Activated CD4-positive, alpha-beta memory T cell treated with anti-CD3 and anti-CD28 coated beads, Interleukin-2, amount 10 ng/mL, durations not matched to agents 7 days and 5 days (primary cell): ENCODE measurements at regions of chr2 and their contacts with region 1.

Region 1: DNA sequence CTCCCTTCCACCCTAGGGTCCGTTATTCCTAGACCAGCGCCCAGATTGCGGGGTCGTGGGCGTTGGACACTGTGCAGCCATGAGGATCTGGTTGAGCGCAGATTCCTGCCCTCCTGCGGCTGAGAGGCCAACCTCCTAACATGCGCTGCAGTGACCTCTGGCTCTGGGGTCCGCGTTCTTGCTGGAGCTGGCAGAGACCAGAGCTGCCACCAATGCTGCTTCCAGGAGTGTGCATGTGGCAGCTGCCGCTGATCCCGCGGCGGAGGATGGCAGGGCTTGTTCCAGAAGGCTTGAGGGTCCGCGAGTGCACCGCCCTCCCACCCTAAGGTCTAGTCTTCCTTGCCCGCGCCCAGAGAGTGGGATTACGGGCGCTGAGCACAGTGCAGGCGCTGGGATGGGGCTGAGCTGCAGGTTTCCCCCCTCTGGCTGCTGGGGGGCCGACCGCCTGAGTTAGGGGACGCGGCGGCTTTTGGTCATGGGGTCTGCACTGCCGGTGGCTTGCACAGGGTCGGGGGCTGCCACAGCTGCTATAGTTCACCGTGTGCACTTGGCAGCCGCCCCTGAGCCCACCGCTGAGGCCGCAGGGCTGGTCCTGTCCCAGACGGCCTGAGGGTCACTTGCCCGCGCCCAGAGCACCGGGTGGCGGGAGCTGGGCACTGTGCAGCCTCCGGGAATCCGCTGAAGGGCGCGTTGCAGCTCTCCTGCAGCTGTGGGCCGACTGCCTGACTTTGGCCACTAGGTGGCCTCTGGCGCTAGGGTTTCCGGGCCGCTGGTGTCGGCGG is 145.9 kb downstream of the CCDC74A start:
- DNase-seq: peak; percentile 74
- H3K4me3 Mint-ChIP-seq: no peak overlapping the region
- H3K27ac Mint-ChIP-seq: no peak overlapping the region
- H3K4me1 Mint-ChIP-seq: peaks cover 4% of the 10 kb centered on the region
- H3K27me3 Mint-ChIP-seq: peaks cover 33% of the 10 kb centered on the region

Region 2: DNA sequence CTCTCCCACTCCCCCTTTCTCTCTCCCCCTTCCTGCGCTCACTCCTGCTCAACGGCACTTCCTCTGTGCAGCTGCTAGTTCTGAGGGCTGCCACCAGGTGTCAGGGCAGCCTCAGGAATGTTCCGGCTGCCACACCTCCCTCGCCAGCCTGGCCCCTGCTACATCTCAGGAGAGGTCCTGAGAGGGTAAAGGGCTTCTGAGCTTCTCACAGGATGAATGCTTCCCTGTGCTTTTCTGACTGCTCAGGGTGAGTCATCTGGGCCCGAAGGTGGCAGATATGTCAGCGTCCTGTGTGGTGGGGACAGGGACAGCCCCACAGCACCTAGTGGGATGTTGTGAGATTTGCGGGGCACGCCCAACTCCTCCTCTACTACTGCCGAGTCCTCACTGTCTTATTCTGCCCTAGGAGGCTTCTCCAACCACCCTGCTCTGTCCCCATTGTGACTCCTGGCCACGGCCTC is 519.5 kb before region 1 on chr2:
- CTCF ChIA-PET with region 1: interaction called, 17 read pairs
- POLR2A ChIA-PET with region 1: no interaction called
- DNase-seq: peak; percentile 75
- H3K4me3 Mint-ChIP-seq: no peak overlapping the region
- H3K27ac Mint-ChIP-seq: peak overlapping the region; percentile 50
- H3K4me1 Mint-ChIP-seq: peaks cover 28% of the 10 kb centered on the region
- H3K27me3 Mint-ChIP-seq: peaks cover 2% of the 10 kb centered on the region

Region 3: DNA sequence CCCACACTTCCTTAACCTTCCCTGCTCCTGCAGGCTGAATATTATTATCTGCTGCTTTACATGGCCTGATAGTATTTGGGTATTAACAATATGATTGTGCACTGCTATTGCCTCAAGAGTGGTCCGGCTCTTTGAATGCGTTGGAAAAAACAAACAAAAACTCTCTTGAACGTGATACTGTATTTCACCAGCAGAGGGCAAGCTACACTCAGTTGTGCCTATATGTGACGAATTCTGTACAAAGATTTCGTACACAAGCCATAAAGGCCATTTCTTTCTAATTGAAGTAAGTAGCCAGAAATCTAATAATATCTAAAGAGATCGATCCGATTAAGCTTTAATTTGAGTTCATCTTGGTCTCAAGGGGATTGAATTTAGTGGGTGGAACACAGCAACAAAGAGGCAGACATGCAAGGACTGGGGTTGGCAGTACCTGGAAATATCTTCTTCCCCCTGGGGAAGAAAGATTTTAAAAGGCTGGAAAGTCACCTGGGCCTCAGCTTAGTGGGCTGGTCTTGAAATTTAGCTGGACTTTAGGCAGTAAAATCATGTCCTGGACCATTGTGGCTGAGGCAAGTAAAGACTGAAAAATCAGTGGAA is 260.3 kb before region 1 on chr2:
- CTCF ChIA-PET with region 1: interaction called, 55 read pairs
- POLR2A ChIA-PET with region 1: no interaction called
- DNase-seq: no peak
- H3K4me3 Mint-ChIP-seq: no peak overlapping the region
- H3K27ac Mint-ChIP-seq: no peak overlapping the region
- H3K4me1 Mint-ChIP-seq: peaks cover 5% of the 10 kb centered on the region
- H3K27me3 Mint-ChIP-seq: peaks cover 51% of the 10 kb centered on the region

Region 4: DNA sequence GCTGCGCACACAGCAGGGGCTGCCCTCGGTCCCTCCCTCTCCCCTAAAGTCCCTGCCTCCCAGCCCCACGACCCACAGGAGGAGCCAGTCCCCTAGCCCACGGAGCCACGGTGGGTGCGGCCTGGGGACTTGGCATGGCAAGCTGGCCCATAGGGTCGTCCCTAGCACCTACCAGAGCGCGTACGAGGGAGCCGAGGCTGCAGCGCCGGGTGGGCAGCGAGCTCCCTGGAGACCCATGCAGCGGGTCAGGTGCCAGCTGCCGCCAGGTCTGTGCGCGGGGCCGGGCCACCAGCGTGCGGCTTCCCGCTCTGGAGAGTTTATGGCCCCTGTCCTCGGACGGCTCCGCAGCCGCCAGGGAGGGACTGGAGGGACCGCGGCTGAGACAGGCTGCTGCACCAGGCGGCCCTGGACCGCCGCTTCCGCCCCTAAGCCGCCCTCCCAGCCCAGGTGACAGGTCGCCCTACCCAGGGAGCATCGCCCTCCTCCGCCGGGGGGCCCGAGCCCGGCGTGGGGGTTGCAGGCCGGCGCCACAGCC is 127.7 kb after region 1 on chr2:
- CTCF ChIA-PET with region 1: interaction called, 25 read pairs
- POLR2A ChIA-PET with region 1: no interaction called
- DNase-seq: no peak
- H3K4me3 Mint-ChIP-seq: no peak overlapping the region
- H3K27ac Mint-ChIP-seq: no peak overlapping the region
- H3K4me1 Mint-ChIP-seq: no peaks in the 10 kb centered on the region
- H3K27me3 Mint-ChIP-seq: peaks cover 5% of the 10 kb centered on the region